CD8-positive, alpha-beta T cell (primary cell): ENCODE measurements at regions of chr7 and their contacts with region 1.

Region 1: GRCh38 chr7:110960811-110961210 is 130.1 kb upstream of the LRRN3 start:
- DNase-seq: no peak
- ATAC-seq: no peak
- H3K4me3 ChIP-seq: no peak overlapping the region
- H3K4me3 Mint-ChIP-seq: no peak overlapping the region
- H3K27ac ChIP-seq: no peak overlapping the region
- H3K27ac Mint-ChIP-seq: no peak overlapping the region
- H3K4me1 ChIP-seq: no peaks in the 10 kb centered on the region
- H3K4me1 Mint-ChIP-seq: peaks cover 4% of the 10 kb centered on the region
- H3K27me3 ChIP-seq: no peaks in the 10 kb centered on the region
- H3K27me3 Mint-ChIP-seq: no peaks in the 10 kb centered on the region
- CTCF ChIP-seq: no peak

Region 2: DNA sequence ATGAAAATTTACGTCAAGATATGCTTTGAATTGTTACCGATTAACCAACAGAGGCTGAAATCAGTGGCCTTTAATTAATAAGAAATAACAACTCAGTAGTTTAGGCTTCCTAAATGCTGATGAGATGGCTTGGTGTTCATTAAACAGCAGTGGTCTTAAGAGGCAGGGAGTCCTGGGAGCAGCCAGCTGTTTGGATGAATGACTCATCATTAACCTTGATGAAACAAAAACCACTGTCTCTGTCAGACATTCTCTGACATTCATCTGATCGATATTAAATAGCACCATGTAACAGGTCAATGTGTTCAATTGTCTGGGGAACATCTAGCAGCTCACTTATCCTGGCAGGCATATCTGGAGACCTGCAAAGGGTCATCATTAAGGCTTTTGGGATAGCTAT is 104.1 kb before region 1 on chr7:
- CTCF ChIA-PET with region 1: no interaction called
- POLR2A ChIA-PET with region 1: no interaction called
- intact Hi-C with region 1: no loop called
- DNase-seq: no peak
- ATAC-seq: no peak
- H3K4me3 ChIP-seq: no peak overlapping the region
- H3K4me3 Mint-ChIP-seq: no peak overlapping the region
- H3K27ac ChIP-seq: no peak overlapping the region
- H3K27ac Mint-ChIP-seq: no peak overlapping the region
- H3K4me1 ChIP-seq: no peaks in the 10 kb centered on the region
- H3K4me1 Mint-ChIP-seq: no peaks in the 10 kb centered on the region
- H3K27me3 ChIP-seq: no peaks in the 10 kb centered on the region
- H3K27me3 Mint-ChIP-seq: no peaks in the 10 kb centered on the region
- CTCF ChIP-seq: no peak

Region 3: GRCh38 chr7:110943701-110944345 is 17.0 kb before region 1 on chr7:
- CTCF ChIA-PET with region 1: interaction called, 3 read pairs
- POLR2A ChIA-PET with region 1: no interaction called
- intact Hi-C with region 1: loop called in 1 of 2 experiments (anchors 2 kb)
- DNase-seq: no peak
- ATAC-seq: no peak
- H3K4me3 ChIP-seq: no peak overlapping the region
- H3K4me3 Mint-ChIP-seq: no peak overlapping the region
- H3K27ac ChIP-seq: no peak overlapping the region
- H3K27ac Mint-ChIP-seq: no peak overlapping the region
- H3K4me1 ChIP-seq: no peaks in the 10 kb centered on the region
- H3K4me1 Mint-ChIP-seq: peaks cover 6% of the 10 kb centered on the region
- H3K27me3 ChIP-seq: no peaks in the 10 kb centered on the region
- H3K27me3 Mint-ChIP-seq: no peaks in the 10 kb centered on the region
- CTCF ChIP-seq: no peak

Region 4: DNA sequence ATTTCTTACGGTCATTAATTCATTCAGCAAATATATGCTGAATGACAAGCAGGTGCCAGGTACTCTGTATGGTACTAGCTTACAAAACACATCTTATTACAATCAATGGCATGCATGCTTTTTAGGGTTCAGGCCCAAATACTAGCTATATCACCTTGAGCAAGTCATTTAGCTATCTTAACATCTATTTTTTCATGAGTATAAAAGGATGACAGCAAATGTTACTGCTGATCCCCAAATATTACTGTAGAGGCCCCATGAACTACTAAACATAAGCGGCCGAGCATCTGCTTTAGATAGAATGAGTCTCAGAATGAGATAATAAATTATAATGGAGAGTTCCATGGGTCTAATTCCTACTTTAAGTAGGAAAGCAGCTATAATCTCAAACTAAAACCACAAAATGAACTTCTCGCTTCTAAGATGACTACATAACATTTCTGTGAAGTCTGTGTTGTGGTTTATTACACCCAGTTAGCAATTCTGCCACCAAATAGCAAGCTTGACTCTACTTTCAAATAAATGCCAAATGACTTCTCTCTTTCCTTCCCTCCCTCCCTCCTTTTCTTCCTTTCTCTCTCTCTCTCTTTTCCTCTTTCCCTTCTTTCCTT is 16.4 kb after region 1 on chr7:
- CTCF ChIA-PET with region 1: no interaction called
- POLR2A ChIA-PET with region 1: no interaction called
- intact Hi-C with region 1: loop called in 1 of 2 experiments (anchors 2 kb)
- DNase-seq: peak in 2 of 9 experiments; percentile 18 to 46
- ATAC-seq: peak; percentile 46
- H3K4me3 ChIP-seq: peak overlapping the region in 1 of 2 experiments; percentile 5
- H3K4me3 Mint-ChIP-seq: peak overlapping the region; percentile 72
- H3K27ac ChIP-seq: no peak overlapping the region
- H3K27ac Mint-ChIP-seq: peak overlapping the region; percentile 88
- H3K4me1 ChIP-seq: peaks cover 34% of the 10 kb centered on the region
- H3K4me1 Mint-ChIP-seq: peaks cover 43% of the 10 kb centered on the region
- H3K27me3 ChIP-seq: no peaks in the 10 kb centered on the region
- H3K27me3 Mint-ChIP-seq: no peaks in the 10 kb centered on the region
- CTCF ChIP-seq: no peak